ENCODE measurements at regions of chr16 and their contacts with region 1.

Region 1: DNA sequence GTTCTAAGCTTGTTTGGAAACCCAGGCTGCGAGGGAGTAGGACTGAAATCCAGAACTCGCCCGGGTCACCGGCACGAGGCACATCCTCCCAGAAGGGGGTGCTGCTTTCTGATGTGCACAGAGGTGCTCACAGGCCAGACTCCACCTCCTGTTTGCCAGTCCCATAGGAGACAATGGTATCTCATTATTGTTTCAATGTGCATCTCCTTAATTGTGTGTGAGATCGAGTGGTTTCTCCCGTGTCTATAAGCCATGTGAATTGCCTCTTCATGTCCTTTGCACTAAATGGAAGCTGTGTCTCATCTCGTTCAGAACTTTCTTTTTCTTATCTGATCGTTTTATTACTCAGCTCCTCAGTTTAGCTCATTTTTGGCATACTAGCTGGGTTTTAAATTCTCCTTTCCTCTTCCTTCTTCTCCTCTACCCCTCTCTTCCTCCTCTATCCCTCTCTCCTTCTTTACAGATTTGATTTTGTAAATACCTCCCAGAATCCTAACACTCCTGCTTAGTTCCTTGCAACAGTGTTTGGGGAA is 32.1 kb upstream of the PRKCB start:
- DNase-seq: no peak
- ATAC-seq: peak; percentile 98
- H3K4me3 ChIP-seq: no peak overlapping the region
- H3K27ac ChIP-seq: no peak overlapping the region
- H3K4me1 ChIP-seq: peaks cover 20% of the 10 kb centered on the region
- H3K27me3 ChIP-seq: no peaks in the 10 kb centered on the region
- CTCF ChIP-seq: peak; percentile 87 to 92 (median 88); a peak in 5 of 6 replicates
- EP300 ChIP-seq: no peak
- POLR2A ChIP-seq: no peak
- RAD21 ChIP-seq: peak; percentile 84

Region 2: DNA sequence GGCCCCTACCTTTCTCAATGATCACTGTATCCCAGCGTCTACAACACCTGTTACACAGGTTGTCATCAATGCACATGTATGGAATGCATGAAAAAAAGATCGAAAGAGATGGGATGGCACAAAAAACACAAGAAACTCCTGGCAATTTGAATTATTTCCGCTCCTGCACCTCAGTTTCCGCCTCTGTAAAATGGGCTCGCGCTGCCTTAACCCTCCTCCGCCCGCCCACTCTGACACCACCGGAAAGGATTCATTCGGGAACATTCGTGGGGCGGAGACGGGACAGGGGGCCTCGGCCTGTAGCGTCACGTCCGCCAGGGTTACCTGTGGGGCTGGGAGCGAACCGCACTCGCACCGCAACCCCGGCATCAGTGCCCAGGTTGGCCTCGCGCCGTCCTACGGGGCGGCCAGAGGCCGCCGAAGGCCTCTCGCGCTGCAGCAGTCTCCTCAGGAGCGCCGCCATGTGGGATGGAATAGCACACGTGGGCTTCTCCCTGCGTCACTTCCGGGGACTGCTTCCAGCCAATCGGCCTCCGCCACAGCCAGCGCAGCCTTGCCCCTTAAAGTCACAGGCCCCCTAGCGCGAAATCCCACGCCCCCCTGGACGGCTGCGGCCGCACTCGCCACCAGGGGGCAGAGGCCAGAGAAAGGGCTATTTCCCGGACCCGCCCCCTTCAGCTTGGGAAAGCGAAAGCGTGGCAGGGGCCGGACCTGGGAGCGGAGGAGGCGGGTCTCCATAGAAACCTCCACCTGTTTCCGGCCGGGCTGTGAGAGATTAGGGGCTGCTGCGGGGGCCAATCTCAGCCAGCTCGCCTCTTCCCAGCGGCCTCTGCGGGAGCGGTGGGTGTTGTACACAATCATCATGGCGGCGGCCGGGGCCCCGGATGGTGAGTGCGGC is 246.5 kb before region 1 on chr16 and contains the starts of genes EARS2 and UBFD1:
- CTCF ChIA-PET with region 1: no interaction called
- POLR2A ChIA-PET with region 1: no interaction called
- RAD21 ChIA-PET with region 1: no interaction called
- SMC1A ChIA-PET with region 1: no interaction called
- in situ Hi-C with region 1: no loop called
- intact Hi-C with region 1: no loop called
- DNase-seq: peak; percentile 95
- ATAC-seq: peak; percentile 94
- H3K4me3 ChIP-seq: peak within 1 kb of the TSS; percentile 92
- H3K27ac ChIP-seq: peak within 1 kb of the TSS; percentile 95
- H3K4me1 ChIP-seq: no peaks in the 10 kb centered on the region; the same call in none of the 2 replicates
- H3K27me3 ChIP-seq: no peaks in the 10 kb centered on the region
- CTCF ChIP-seq: peak; percentile 95 to 97 (median 96); a peak in 5 of 6 replicates
- EP300 ChIP-seq: no peak; a peak in 1 of 4 replicates
- POLR2A ChIP-seq: peak; percentile 91
- RAD21 ChIP-seq: peak; percentile 51; the same call in 1 of the 2 replicates
- polyA plus RNA-seq, gene EARS2: 12.9 to 27.0 TPM
- polyA plus RNA-seq, gene UBFD1: 7.3 to 7.9 TPM

Region 3: GRCh38 chr16:23826528-23827045 is 22.9 kb after region 1 on chr16:
- CTCF ChIA-PET with region 1: interaction called, 89 read pairs
- POLR2A ChIA-PET with region 1: no interaction called
- RAD21 ChIA-PET with region 1: interaction called, 14 read pairs
- SMC1A ChIA-PET with region 1: interaction called, 10 read pairs
- in situ Hi-C with region 1: no loop called
- intact Hi-C with region 1: no loop called
- DNase-seq: peak; percentile 79
- ATAC-seq: peak; percentile 91
- H3K4me3 ChIP-seq: 0 out of 2 replicates have a peak overlapping the region, but pooled peaks have one; percentile 1
- H3K27ac ChIP-seq: peak overlapping the region; percentile 63
- H3K4me1 ChIP-seq: peaks cover 21% of the 10 kb centered on the region
- H3K27me3 ChIP-seq: no peaks in the 10 kb centered on the region
- CTCF ChIP-seq: no peak
- EP300 ChIP-seq: peak in 1 of 2 experiments; percentile 13; a peak in 1 of 4 replicates
- POLR2A ChIP-seq: no peak
- RAD21 ChIP-seq: no peak

Region 4: GRCh38 chr16:23847948-23848347 is 44.3 kb after region 1 on chr16:
- CTCF ChIA-PET with region 1: interaction called, 30 read pairs
- POLR2A ChIA-PET with region 1: no interaction called
- RAD21 ChIA-PET with region 1: interaction called, 37 read pairs
- SMC1A ChIA-PET with region 1: interaction called, 89 read pairs
- in situ Hi-C with region 1: no loop called
- intact Hi-C with region 1: no loop called
- DNase-seq: no peak
- ATAC-seq: peak; percentile 60
- H3K4me3 ChIP-seq: no peak overlapping the region; the same call in 1 of the 2 replicates
- H3K27ac ChIP-seq: peak overlapping the region; percentile 52
- H3K4me1 ChIP-seq: peaks cover 59% of the 10 kb centered on the region
- H3K27me3 ChIP-seq: no peaks in the 10 kb centered on the region
- CTCF ChIP-seq: no peak
- EP300 ChIP-seq: no peak
- POLR2A ChIP-seq: no peak
- RAD21 ChIP-seq: no peak

Region 5: GRCh38 chr16:23877107-23878090 is 73.7 kb after region 1 on chr16:
- CTCF ChIA-PET with region 1: interaction called, 46 read pairs
- POLR2A ChIA-PET with region 1: interaction called, 3 read pairs
- RAD21 ChIA-PET with region 1: interaction called, 10 read pairs
- SMC1A ChIA-PET with region 1: interaction called, 34 read pairs
- in situ Hi-C with region 1: no loop called
- intact Hi-C with region 1: no loop called
- DNase-seq: no peak
- ATAC-seq: no peak; the same call in 2 of the 3 replicates
- H3K4me3 ChIP-seq: no peak overlapping the region
- H3K27ac ChIP-seq: peak overlapping the region; percentile 69
- H3K4me1 ChIP-seq: peaks cover 63% of the 10 kb centered on the region
- H3K27me3 ChIP-seq: no peaks in the 10 kb centered on the region
- CTCF ChIP-seq: peak; percentile 23 to 28 (median 27); a peak in 2 of 6 replicates
- EP300 ChIP-seq: no peak
- POLR2A ChIP-seq: no peak
- RAD21 ChIP-seq: peak; percentile 53

Region 6: DNA sequence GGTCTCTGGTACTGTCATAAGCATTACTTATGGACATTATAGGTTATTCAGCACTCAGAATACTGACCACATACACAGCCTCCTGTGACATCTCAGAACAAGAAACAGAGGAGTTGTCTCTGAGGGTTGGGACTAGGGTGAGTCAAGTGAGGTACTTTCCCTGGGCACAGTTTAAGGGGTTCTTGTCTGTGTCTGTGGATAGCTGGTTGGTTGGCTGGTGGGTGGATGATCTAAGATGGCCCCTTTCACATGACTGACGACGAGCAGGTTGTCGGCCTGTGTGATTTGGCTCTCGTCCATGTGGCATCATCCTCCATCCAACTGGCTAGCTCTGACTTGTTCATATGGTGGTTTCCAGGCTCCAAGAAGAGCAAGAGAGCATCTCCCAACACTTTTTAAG is 196.0 kb after region 1 on chr16:
- CTCF ChIA-PET with region 1: interaction called, 8 read pairs
- POLR2A ChIA-PET with region 1: no interaction called
- RAD21 ChIA-PET with region 1: interaction called, 6 read pairs
- SMC1A ChIA-PET with region 1: interaction called, 12 read pairs
- in situ Hi-C with region 1: no loop called
- intact Hi-C with region 1: no loop called
- DNase-seq: peak; percentile 47
- ATAC-seq: peak; percentile 93
- H3K4me3 ChIP-seq: no peak overlapping the region
- H3K27ac ChIP-seq: peak overlapping the region; percentile 27; the same call in 1 of the 2 replicates
- H3K4me1 ChIP-seq: peaks cover 17% of the 10 kb centered on the region
- H3K27me3 ChIP-seq: no peaks in the 10 kb centered on the region
- CTCF ChIP-seq: no peak
- EP300 ChIP-seq: no peak
- POLR2A ChIP-seq: 0 out of 2 replicates have a peak, but pooled peaks have one; percentile 27
- RAD21 ChIP-seq: no peak

Region 7: GRCh38 chr16:24036614-24037013 is 233.0 kb after region 1 on chr16:
- CTCF ChIA-PET with region 1: interaction called, 125 read pairs
- POLR2A ChIA-PET with region 1: no interaction called
- RAD21 ChIA-PET with region 1: interaction called, 30 read pairs
- SMC1A ChIA-PET with region 1: interaction called, 70 read pairs
- in situ Hi-C with region 1: no loop called
- intact Hi-C with region 1: loop called (anchors 1 kb)
- DNase-seq: no peak
- ATAC-seq: peak; percentile 69
- H3K4me3 ChIP-seq: no peak overlapping the region
- H3K27ac ChIP-seq: no peak overlapping the region
- H3K4me1 ChIP-seq: peaks cover 8% of the 10 kb centered on the region
- H3K27me3 ChIP-seq: no peaks in the 10 kb centered on the region
- CTCF ChIP-seq: peak; percentile 68 to 81 (median 72); a peak in 5 of 6 replicates
- EP300 ChIP-seq: no peak
- POLR2A ChIP-seq: no peak
- RAD21 ChIP-seq: peak; percentile 88

Region 8: GRCh38 chr16:24253192-24253591 is 449.5 kb after region 1 on chr16:
- CTCF ChIA-PET with region 1: interaction called, 32 read pairs
- POLR2A ChIA-PET with region 1: no interaction called
- RAD21 ChIA-PET with region 1: interaction called, 10 read pairs
- SMC1A ChIA-PET with region 1: interaction called, 6 read pairs
- in situ Hi-C with region 1: loop called (anchors 10 kb)
- intact Hi-C with region 1: no loop called
- DNase-seq: no peak
- ATAC-seq: peak; percentile 95
- H3K4me3 ChIP-seq: no peak overlapping the region
- H3K27ac ChIP-seq: no peak overlapping the region
- H3K4me1 ChIP-seq: no peaks in the 10 kb centered on the region
- H3K27me3 ChIP-seq: peaks cover 0 to 5% of the 10 kb centered on the region in 2 experiments; a peak in 3 of 4 replicates
- CTCF ChIP-seq: peak; percentile 60 to 78 (median 71)
- EP300 ChIP-seq: no peak
- POLR2A ChIP-seq: no peak
- RAD21 ChIP-seq: peak; percentile 62

Region 9: GRCh38 chr16:25449802-25450201 is 1646.1 kb after region 1 on chr16:
- CTCF ChIA-PET with region 1: no interaction called
- POLR2A ChIA-PET with region 1: no interaction called
- RAD21 ChIA-PET with region 1: no interaction called
- SMC1A ChIA-PET with region 1: no interaction called
- in situ Hi-C with region 1: no loop called
- intact Hi-C with region 1: no loop called
- DNase-seq: no peak
- ATAC-seq: no peak
- H3K4me3 ChIP-seq: no peak overlapping the region
- H3K27ac ChIP-seq: no peak overlapping the region
- H3K4me1 ChIP-seq: no peaks in the 10 kb centered on the region
- H3K27me3 ChIP-seq: no peaks in the 10 kb centered on the region; a peak in 1 of 4 replicates
- CTCF ChIP-seq: no peak
- EP300 ChIP-seq: no peak
- POLR2A ChIP-seq: no peak
- RAD21 ChIP-seq: no peak